IMR-90 (cell line): ENCODE measurements at regions of chr1 and their contacts with region 1.

Region 1: DNA sequence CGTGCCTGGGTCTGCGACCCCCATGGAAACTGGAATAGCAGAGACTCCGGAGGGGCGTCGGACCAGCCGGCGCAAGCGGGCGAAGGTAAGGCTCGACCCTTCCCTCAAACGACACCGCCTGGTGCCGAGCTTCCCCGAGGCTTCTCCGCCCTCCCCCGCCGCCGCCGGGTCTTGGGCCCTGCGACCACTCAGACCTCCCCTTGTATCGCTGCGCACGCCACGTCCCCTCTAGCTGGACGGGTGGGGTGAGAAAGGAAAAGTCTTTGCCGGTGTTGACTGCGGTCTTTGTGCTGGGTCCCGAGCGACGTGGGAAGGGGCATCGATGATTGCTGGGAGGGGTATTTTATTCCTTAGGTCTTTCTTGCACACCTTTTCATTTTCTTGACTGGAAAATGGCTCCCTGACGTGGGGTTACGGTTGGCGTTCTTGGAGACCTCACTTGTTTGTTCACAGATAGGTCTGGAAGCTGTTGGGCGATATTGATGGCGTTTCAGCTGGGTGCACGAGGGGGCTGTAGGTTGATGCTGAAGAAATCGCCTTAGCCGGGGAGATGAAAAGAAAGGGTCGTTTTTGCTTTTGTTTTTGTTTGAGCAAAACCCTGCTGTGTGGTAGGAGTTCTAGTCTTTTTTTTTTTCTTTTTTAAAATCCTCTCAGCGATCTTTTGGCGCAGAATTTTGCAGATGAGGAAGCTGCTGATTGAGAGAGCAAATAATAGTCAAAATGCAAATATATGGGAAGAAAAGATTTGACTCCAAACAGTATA is 776 bp downstream of the KDM1A start:
- DNase-seq: peak; percentile 40
- ATAC-seq: peak; percentile 16
- H3K4me3 ChIP-seq: peak overlapping the region; percentile 59
- H3K27ac ChIP-seq: peak overlapping the region; percentile 67
- H3K4me1 ChIP-seq: peaks cover 2% of the 10 kb centered on the region; the same call in 1 of the 2 replicates
- H3K27me3 ChIP-seq: no peaks in the 10 kb centered on the region
- CTCF ChIP-seq: no peak
- POLR2A ChIP-seq: no peak
- RAD21 ChIP-seq: no peak

Region 2: DNA sequence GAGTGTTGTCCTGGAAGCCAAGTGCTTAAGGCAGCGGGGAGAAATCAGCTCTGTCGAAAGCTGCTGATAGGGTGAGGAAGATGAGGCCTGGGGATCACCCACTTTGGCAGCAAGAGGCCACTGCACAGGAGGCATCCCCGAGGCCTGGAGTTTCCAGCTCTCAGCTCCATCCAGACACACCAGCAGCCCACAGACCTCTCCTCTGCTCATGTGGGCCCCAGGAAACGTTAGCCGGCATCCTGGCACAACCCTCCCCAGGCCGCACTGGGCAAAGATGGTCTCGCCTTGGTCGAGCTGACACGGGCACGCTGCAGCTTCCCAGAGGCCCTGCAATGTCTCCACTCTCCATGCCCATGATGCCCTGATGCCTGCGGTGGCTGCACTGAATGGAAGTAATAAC is 619.1 kb before region 1 on chr1:
- CTCF ChIA-PET with region 1: no interaction called
- POLR2A ChIA-PET with region 1: interaction called, 22 read pairs
- dilution Hi-C with region 1: no loop called
- in situ Hi-C with region 1: no loop called
- intact Hi-C with region 1: no loop called
- DNase-seq: no peak
- ATAC-seq: no peak
- H3K4me3 ChIP-seq: no peak overlapping the region
- H3K27ac ChIP-seq: no peak overlapping the region
- H3K4me1 ChIP-seq: no peaks in the 10 kb centered on the region
- H3K27me3 ChIP-seq: peaks cover 72% of the 10 kb centered on the region
- CTCF ChIP-seq: no peak
- POLR2A ChIP-seq: no peak
- RAD21 ChIP-seq: no peak

Region 3: DNA sequence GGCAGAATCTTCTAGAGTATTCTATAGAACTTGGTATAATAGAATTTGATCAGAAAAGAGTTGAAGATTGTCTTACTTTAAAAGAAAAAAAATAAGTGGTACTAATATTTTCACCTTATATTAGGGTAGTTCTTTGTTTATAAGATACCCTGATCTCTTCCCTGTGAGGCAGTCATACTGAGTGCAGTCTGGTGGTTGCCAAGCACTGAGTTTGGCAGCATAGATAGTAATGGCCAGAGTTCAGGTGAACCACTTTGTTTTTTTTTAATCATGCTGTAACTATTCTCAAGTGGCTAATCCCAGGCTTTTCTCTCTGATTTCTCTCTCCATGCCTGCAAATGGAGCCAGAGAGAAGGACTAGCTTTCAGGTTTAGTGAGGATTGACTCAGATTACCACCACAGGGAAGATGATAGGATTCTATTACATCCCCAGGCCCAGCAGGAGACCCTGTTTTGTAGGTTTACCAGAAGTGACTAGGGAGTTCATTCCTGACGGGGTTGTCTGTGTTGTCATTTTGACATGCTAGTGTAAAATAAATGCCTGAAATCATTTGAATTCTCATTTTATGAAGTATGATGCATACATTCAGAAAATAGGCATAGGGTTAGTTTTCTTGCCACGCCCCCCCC is 15.9 kb after region 1 on chr1:
- CTCF ChIA-PET with region 1: no interaction called
- POLR2A ChIA-PET with region 1: interaction called, 3 read pairs
- dilution Hi-C with region 1: no loop called
- in situ Hi-C with region 1: no loop called
- intact Hi-C with region 1: loop called (anchors 2 kb)
- DNase-seq: no peak
- ATAC-seq: no peak
- H3K4me3 ChIP-seq: no peak overlapping the region
- H3K27ac ChIP-seq: no peak overlapping the region
- H3K4me1 ChIP-seq: no peaks in the 10 kb centered on the region
- H3K27me3 ChIP-seq: no peaks in the 10 kb centered on the region
- CTCF ChIP-seq: no peak
- POLR2A ChIP-seq: no peak
- RAD21 ChIP-seq: no peak